K562 (cell line): ENCODE measurements at regions of chr3 and their contacts with region 1.

Region 1: GRCh38 chr3:58994746-58995330 is 55.0 kb downstream of the CFAP20DC start:
- DNase-seq: peak; percentile 12 to 71 (median 32)
- ATAC-seq: peak; percentile 44; the same call in 2 of the 3 replicates
- H3K4me3 ChIP-seq: no peak overlapping the region
- H3K27ac ChIP-seq: no peak overlapping the region
- H3K4me1 ChIP-seq: peaks cover 2 to 22% of the 10 kb centered on the region in 2 experiments; a peak in 3 of 5 replicates
- H3K27me3 ChIP-seq: no peaks in the 10 kb centered on the region
- CTCF ChIP-seq: peak; percentile 61 to 80 (median 64)
- EP300 ChIP-seq: no peak
- POLR2A ChIP-seq: no peak
- RAD21 ChIP-seq: peak; percentile 65 to 78

Region 2: DNA sequence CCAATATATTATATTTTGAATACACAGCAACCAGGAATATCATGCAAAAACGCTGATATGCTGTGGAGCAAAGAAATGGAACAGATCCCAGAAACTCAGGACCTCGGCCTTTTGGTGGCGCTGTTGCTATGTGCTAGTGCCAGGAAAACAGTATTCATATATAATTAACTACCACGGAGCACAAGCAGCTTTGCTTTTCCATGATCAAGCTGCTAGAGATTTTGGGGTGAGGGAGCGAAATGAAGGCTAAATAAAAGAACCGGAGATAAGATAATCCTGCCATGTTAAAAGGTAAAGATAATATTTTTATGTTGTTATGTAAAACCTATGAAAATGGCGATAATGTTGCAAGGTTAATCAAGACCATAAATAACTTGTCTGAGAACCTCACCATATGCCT is 170.6 kb before region 1 on chr3:
- CTCF ChIA-PET with region 1: interaction called, 3 read pairs
- POLR2A ChIA-PET with region 1: no interaction called
- in situ Hi-C with region 1: no loop called
- intact Hi-C with region 1: loop called (anchors 2 kb)
- DNase-seq: peak; percentile 13 to 70 (median 28)
- ATAC-seq: peak; percentile 81
- H3K4me3 ChIP-seq: no peak overlapping the region
- H3K27ac ChIP-seq: no peak overlapping the region
- H3K4me1 ChIP-seq: no peaks in the 10 kb centered on the region
- H3K27me3 ChIP-seq: no peaks in the 10 kb centered on the region
- CTCF ChIP-seq: peak; percentile 59 to 81 (median 69)
- EP300 ChIP-seq: no peak
- POLR2A ChIP-seq: no peak
- RAD21 ChIP-seq: peak; percentile 68 to 75

Region 3: GRCh38 chr3:59027607-59028006 is 32.8 kb after region 1 on chr3:
- CTCF ChIA-PET with region 1: no interaction called
- POLR2A ChIA-PET with region 1: no interaction called
- in situ Hi-C with region 1: no loop called
- intact Hi-C with region 1: no loop called
- DNase-seq: no peak
- ATAC-seq: no peak
- H3K4me3 ChIP-seq: no peak overlapping the region
- H3K27ac ChIP-seq: no peak overlapping the region
- H3K4me1 ChIP-seq: no peaks in the 10 kb centered on the region
- H3K27me3 ChIP-seq: no peaks in the 10 kb centered on the region
- CTCF ChIP-seq: no peak
- EP300 ChIP-seq: no peak
- POLR2A ChIP-seq: no peak
- RAD21 ChIP-seq: no peak

Region 4: DNA sequence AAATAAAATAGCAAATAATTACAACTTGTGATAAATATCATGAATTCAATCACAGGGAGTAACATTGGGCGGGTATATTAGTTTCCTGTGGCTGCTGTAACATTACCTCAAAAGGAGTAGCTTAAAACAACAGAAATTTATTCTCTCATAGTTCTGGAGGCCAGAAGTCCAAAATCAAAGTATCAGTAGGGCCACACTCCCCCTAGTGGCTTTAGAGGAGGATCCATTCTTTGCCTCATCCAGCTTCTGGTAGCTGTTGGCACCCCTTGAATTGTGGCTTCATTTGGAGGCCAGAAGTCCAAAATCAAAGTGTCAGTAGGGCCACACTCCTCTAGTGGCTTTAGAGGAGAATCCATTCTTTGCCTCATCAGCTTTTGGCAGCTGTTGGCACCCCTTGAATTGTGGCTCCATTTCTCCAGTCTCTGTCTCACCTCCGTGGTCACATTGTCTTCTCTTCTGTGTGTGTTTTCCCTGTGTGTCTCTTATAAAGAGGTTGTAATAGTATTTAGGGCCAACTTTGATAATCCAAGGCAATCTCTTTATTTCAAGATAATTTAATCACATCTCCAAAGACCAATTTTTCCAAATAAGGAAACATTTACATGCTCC is 58.1 kb after region 1 on chr3:
- CTCF ChIA-PET with region 1: no interaction called
- POLR2A ChIA-PET with region 1: no interaction called
- in situ Hi-C with region 1: no loop called
- intact Hi-C with region 1: loop called (anchors 1 kb)
- DNase-seq: peak in 1 of 4 experiments; percentile 37
- ATAC-seq: no peak
- H3K4me3 ChIP-seq: no peak overlapping the region
- H3K27ac ChIP-seq: no peak overlapping the region
- H3K4me1 ChIP-seq: peaks cover 0 to 7% of the 10 kb centered on the region in 2 experiments; a peak in 3 of 5 replicates
- H3K27me3 ChIP-seq: no peaks in the 10 kb centered on the region
- CTCF ChIP-seq: peak; percentile 37 to 48 (median 48); a peak in 4 of 6 replicates
- EP300 ChIP-seq: no peak
- POLR2A ChIP-seq: no peak
- RAD21 ChIP-seq: peak; percentile 21 to 69; a peak in 2 of 4 replicates

Region 5: DNA sequence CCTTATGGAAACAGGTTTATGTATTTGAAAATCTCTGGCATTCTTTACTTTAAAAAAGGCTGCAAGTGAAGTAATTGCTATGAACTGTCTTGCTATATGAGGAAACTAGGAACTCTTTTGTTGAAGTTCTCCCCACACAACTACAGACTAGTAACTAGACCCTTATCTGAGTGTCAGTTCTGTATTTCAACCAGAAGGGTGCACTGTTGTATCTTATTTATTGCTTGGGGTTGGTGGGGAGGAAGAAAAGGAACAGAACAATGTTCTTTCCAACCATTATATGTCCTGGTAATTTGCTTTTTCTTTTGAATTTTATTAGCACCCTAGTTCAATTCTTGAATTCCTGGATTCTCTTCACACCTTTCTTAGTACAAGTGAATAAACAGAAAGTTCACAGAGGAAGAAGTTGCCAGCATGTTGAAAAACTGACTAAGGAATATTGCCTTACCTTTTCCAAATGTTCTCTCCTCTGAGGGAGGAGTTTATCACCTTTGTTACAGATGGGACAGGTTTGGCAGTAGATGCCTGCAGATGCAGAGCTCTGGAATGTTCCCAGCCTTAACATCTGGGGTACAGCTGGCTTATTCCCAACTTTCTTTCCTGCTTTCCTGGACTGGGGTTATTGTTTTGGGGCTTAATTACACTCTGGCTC is 217.4 kb after region 1 on chr3:
- CTCF ChIA-PET with region 1: no interaction called
- POLR2A ChIA-PET with region 1: no interaction called
- in situ Hi-C with region 1: no loop called
- intact Hi-C with region 1: loop called (anchors 5 kb)
- DNase-seq: peak; percentile 12 to 30 (median 28)
- ATAC-seq: peak; percentile 86
- H3K4me3 ChIP-seq: no peak overlapping the region
- H3K27ac ChIP-seq: no peak overlapping the region
- H3K4me1 ChIP-seq: no peaks in the 10 kb centered on the region
- H3K27me3 ChIP-seq: no peaks in the 10 kb centered on the region
- CTCF ChIP-seq: peak in 2 of 3 experiments; percentile 47 to 61; a peak in 5 of 6 replicates
- EP300 ChIP-seq: no peak
- POLR2A ChIP-seq: no peak
- RAD21 ChIP-seq: peak; percentile 59 to 74